ENCODE measurements at regions of chr3 and their contacts with region 1.

Region 1: DNA sequence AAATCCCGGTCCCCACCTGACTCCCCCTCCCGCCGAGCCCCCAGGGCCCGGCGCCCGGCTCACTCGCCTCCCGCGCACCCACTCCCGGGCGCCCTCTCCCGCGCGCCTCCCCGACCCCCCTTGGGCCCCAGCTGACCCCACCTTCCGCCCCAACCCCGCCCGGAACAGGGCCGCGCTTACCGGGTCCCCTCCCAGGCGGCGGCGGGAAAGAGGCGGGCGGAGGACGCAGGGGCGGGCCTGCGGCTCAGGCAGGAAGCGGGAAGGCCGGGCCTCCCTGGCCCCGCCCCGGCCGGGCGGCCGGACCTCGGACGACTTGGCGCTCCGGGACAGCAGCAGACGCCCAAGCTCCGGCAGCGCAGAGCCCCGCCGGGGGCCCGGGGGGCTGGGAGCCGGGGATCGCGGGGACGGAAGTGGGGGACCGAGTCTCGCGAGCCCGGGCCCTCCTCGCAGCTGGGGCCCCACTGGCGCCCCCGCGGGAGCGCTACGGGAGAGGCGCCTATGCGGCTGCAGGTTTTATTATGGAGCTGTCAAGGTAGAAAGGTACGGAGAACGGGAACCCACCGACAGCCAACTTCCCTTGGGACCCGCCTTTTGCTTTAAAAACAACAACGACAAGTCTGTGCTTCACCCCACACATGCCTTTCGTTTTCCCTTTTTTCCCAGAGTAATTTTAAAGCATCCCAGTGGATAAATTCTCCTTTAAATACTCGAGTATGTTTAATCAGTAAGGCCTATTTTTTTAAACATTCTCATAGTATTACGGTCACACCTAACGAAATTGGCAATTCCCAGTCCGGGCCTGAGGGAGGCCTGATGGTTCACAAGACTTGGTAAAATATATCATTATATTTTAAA is at the start of gene SLC41A3:
- DNase-seq: peak; percentile 94
- H3K4me3 ChIP-seq: peak within 1 kb of the TSS; percentile 64 to 92 (median 76)
- H3K27ac ChIP-seq: peak within 1 kb of the TSS; percentile 86 to 96 (median 90)
- H3K4me1 ChIP-seq: peaks cover 0 to 30% (median 22%) of the 10 kb centered on the region in 4 donors
- H3K27me3 ChIP-seq: no peaks in the 10 kb centered on the region
- CTCF ChIP-seq: peak; percentile 21 to 62 (median 35)
- EP300 ChIP-seq: no peak
- POLR2A ChIP-seq: peak; percentile 26
- total RNA-seq, gene SLC41A3: 31.6 to 68.1 (median 38.9) TPM

Region 2: DNA sequence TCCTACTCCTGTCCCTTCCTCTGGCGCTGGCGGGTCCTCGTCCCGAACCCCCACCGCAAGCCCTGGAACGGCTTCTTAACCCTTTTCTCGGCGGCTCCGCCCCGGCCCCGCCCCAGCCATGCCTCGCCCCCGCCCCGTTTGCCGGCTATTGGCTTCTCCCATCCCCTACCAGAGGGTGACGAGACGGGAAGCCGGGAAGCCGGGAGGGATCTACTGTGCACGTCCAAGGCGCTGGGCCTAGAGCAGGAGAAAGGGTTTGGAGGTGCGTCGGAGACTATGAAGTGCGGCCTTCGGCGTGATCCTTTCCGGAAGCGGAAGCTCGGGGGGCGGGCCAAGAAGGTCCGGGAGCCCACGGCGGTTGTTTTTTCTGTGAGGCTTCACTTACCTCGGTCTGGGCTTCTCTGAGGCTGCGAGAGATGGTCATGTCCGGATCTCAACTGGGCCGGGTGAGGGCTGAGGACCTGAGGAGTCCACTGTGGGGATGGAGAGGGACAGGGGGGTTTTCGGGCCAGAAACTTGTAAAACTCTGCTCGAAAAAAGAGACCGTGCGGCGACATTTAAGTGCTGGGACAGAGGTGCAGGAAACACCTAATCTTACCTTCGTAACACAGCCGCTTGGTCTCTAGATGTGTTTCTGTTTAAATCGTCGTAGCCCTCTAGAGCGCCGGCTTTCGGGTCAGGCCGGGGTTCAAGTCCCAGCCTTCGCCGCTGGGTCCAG is 93.7 kb before region 1 on chr3:
- intact Hi-C with region 1: loop called (anchors 5 kb)
- DNase-seq: peak; percentile 96
- H3K4me3 ChIP-seq: peak overlapping the region; percentile 60 to 70 (median 66)
- H3K27ac ChIP-seq: peak overlapping the region; percentile 78 to 88 (median 84)
- H3K4me1 ChIP-seq: peaks cover 6 to 18% (median 11%) of the 10 kb centered on the region in 4 donors
- H3K27me3 ChIP-seq: no peaks in the 10 kb centered on the region
- CTCF ChIP-seq: no peak
- EP300 ChIP-seq: no peak
- POLR2A ChIP-seq: no peak

Region 3: DNA sequence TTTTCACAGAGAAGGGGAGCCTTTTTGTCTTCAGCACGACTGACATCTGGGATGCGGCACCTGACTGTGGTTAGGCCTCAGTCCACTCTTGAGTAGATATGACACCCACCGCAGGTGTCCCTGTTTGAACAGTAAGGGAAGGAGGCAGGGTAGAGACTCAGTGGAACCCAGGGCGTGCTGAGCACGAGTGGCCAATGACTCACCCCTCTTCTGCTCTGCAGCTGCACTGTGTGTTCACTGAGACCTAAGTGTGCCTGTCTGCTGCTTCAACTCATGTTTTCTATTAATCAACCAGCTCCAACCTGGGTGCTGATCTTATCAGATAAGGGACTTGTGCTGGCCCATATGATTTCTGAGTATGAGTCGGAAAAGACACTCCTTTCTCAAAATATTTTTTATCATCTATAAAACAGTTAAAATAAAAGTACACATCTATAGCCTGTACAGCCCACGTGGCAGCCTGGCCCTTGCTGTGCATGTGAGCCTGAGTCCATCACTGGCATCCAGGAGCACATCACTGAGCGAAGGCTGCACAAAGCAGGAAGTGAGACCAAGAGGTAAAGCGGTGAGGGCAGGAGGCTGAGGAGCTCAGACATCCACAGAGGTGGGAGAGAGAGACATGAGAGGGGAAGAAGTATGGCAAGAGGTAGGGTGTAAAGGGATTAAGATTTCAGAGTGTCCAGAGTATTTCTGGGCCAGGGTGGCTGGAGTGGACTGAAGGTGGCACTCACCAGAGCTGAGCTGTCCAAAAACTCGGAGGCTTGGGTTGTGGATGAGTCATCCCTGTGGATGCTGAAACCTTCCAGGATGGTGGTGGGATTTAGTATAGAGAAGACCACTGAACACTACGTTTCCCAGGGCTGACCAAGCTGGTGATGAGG is 49.4 kb before region 1 on chr3:
- intact Hi-C with region 1: no loop called
- DNase-seq: peak; percentile 83
- H3K4me3 ChIP-seq: no peak overlapping the region
- H3K27ac ChIP-seq: no peak overlapping the region
- H3K4me1 ChIP-seq: no peaks in the 10 kb centered on the region
- H3K27me3 ChIP-seq: no peaks in the 10 kb centered on the region
- CTCF ChIP-seq: no peak
- EP300 ChIP-seq: no peak
- POLR2A ChIP-seq: no peak

Measured in esophagus muscularis mucosa (tissue), 4 donors.